Ovary (tissue), 10 donors: ENCODE measurements at regions of chr1 and their contacts with region 1.

Region 1: DNA sequence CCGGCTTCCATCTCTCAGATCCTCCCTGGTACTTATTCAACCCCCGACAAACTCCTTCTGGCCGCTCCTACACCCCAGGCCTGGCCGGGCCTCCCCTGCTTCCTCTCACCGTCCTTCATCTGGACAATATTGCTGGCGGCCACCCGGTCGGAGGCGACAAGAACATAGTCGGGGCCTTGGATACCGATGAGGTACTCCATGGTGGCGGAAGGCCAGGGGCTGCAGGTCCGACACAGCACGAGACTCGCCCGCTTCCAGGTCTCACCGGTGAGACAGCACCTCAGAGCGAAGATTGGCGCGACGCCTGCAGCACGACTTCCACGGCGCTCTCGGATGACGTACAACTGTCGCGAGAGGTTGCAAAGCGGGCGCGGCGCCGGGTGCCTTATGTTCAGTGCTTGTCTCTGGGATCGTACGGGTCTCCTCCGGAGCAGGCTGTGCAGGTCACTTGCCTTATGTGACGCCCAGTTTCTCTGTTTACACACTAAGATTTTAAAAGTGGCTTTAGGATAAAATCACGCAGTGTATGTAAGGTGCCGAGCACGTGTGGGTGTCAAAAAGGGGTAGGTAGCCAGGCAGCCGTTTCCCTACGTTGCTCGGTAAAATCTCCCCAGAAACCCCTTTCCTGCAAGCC is at the start of gene PSMB2:
- DNase-seq: peak; percentile 92 to 97 (median 95)
- H3K4me3 ChIP-seq: peak within 1 kb of the TSS; percentile 60
- H3K27ac ChIP-seq: peak within 1 kb of the TSS; percentile 54 to 77
- H3K4me1 ChIP-seq: no peaks in the 10 kb centered on the region
- H3K27me3 ChIP-seq: no peaks in the 10 kb centered on the region
- CTCF ChIP-seq: no peak
- EP300 ChIP-seq: no peak
- POLR2A ChIP-seq: peak; percentile 73
- total RNA-seq, gene PSMB2: 16.7 to 39.8 (median 36.9) TPM

Region 2: DNA sequence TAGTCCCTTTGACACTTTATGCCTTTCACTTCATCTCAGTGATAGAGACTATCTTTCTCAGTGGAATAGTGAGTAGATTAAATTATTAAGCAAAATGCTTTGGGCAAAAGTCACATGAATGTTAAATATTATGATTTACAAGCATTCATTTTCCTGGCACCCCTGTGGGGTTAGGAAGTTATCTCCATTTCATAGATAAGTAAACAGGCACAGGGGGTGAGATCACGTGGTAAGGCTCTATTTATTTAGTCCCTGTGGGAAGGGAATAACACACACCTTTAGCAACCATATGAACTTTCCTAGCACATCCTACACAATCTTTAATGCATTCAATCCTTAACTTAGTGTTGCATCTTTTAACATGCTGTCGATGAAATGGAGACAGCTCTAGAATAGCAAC is 12.3 kb before region 1 on chr1:
- intact Hi-C with region 1: loop called in 1 of 4 experiments (anchors 1 kb)
- DNase-seq: no peak
- H3K4me3 ChIP-seq: no peak overlapping the region
- H3K27ac ChIP-seq: no peak overlapping the region
- H3K4me1 ChIP-seq: no peaks in the 10 kb centered on the region
- H3K27me3 ChIP-seq: no peaks in the 10 kb centered on the region
- CTCF ChIP-seq: no peak
- EP300 ChIP-seq: no peak
- POLR2A ChIP-seq: no peak